Naive thymus-derived CD4-positive, alpha-beta T cell (primary cell): ENCODE measurements at regions of chr12 and their contacts with region 1.

Region 1: DNA sequence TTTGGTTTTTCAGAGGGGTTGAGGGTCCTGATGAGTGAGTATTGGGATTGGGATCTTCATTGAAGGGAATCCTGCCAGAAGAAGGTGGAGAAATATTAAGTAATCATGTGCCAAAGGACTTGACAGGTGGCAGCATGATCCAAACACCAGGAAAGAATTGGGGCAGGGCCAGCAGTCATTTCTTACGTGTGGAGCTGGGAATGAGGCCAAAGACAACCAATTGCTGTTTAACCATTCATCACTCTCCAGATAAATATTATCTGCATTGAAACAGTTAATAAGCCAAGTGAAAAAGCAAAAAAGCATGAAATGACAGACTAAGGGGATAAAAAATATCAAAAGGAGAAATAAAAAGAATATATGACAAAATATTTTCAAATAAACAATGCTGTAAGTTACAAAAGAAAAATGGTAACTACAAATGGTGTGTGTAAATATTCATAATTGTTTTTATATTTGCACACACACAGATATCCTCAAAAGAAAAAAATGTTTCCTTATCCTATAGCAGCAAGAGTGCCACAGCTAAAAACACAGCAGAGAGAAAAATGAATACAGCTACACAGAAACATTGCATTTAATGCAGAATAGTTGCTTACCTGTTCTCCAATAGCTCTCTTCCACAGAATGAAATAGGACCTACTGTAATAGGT is 26.1 kb downstream of the C2CD5 start:
- DNase-seq: no peak
- ATAC-seq: no peak
- H3K4me3 ChIP-seq: no peak overlapping the region
- H3K4me3 Mint-ChIP-seq: no peak overlapping the region
- H3K27ac ChIP-seq: no peak overlapping the region
- H3K27ac Mint-ChIP-seq: no peak overlapping the region
- H3K4me1 ChIP-seq: no peaks in the 10 kb centered on the region
- H3K4me1 Mint-ChIP-seq: peaks cover 0 to 5% (median 0%) of the 10 kb centered on the region in 7 donors
- H3K27me3 ChIP-seq: no peaks in the 10 kb centered on the region
- H3K27me3 Mint-ChIP-seq: no peaks in the 10 kb centered on the region

Region 2: GRCh38 chr12:22500100-22500499 is 18.1 kb before region 1 on chr12:
- CTCF ChIA-PET with region 1: no interaction called
- POLR2A ChIA-PET with region 1: no interaction called
- intact Hi-C with region 1: loop called in 1 of 2 experiments (anchors 2 kb)
- DNase-seq: no peak
- ATAC-seq: no peak
- H3K4me3 ChIP-seq: no peak overlapping the region
- H3K4me3 Mint-ChIP-seq: no peak overlapping the region
- H3K27ac ChIP-seq: no peak overlapping the region
- H3K27ac Mint-ChIP-seq: peak overlapping the region in 2 of 9 donors; percentile 15 to 62
- H3K4me1 ChIP-seq: no peaks in the 10 kb centered on the region
- H3K4me1 Mint-ChIP-seq: peaks cover 0 to 6% (median 0%) of the 10 kb centered on the region in 7 donors
- H3K27me3 ChIP-seq: no peaks in the 10 kb centered on the region
- H3K27me3 Mint-ChIP-seq: no peaks in the 10 kb centered on the region

Region 3: GRCh38 chr12:22539055-22539454 is 20.9 kb after region 1 on chr12:
- CTCF ChIA-PET with region 1: interaction called, 3 read pairs
- POLR2A ChIA-PET with region 1: interaction called, 3 read pairs
- intact Hi-C with region 1: loop called in 1 of 2 experiments (anchors 2 kb)
- DNase-seq: no peak
- ATAC-seq: peak; percentile 76
- H3K4me3 ChIP-seq: no peak overlapping the region
- H3K4me3 Mint-ChIP-seq: peak overlapping the region in 8 of 10 donors; percentile 0 to 52 (median 30)
- H3K27ac ChIP-seq: no peak overlapping the region
- H3K27ac Mint-ChIP-seq: peak overlapping the region in 2 of 9 donors; percentile 1 to 3
- H3K4me1 ChIP-seq: peaks cover 18 to 33% of the 10 kb centered on the region in 2 donors
- H3K4me1 Mint-ChIP-seq: peaks cover 48 to 85% (median 75%) of the 10 kb centered on the region in 7 donors
- H3K27me3 ChIP-seq: no peaks in the 10 kb centered on the region
- H3K27me3 Mint-ChIP-seq: no peaks in the 10 kb centered on the region